ENCODE measurements at regions of chr11 and their contacts with region 1.

Region 1: GRCh38 chr11:44658506-44658850 is 68.3 kb upstream of the TSPAN18 start:
- DNase-seq: peak in 4 of 5 donors; percentile 30 to 44 (median 32)
- H3K4me3 ChIP-seq: no peak overlapping the region
- H3K4me3 Mint-ChIP-seq: peak overlapping the region in 2 of 8 donors; percentile 27 to 66
- H3K27ac ChIP-seq: no peak overlapping the region
- H3K27ac Mint-ChIP-seq: peak overlapping the region in 2 of 7 donors; percentile 11 to 81
- H3K4me1 ChIP-seq: peaks cover 18% of the 10 kb centered on the region
- H3K4me1 Mint-ChIP-seq: peaks cover 19 to 38% (median 25%) of the 10 kb centered on the region in 4 donors
- H3K27me3 ChIP-seq: no peaks in the 10 kb centered on the region
- H3K27me3 Mint-ChIP-seq: no peaks in the 10 kb centered on the region

Region 2: DNA sequence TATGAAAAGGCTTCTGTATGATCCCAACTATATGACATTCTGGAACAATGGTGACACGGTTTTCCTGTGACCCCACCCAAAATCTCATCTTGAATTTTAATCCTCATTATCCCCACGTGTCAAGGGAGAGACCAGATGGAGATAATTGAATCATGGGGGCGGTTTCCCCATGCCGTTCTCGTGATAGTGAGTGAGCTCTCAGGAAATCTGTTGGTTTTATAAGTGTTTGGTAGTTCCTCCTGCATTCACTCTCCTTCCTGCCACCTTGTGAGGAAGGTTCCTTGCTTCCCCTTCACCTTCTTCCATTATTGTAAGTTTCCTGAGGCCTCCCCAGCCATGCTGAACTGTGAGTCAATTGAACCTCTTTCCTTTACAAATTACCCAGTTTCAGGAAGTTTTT is 15.2 kb after region 1 on chr11:
- CTCF ChIA-PET with region 1: no interaction called
- POLR2A ChIA-PET with region 1: interaction called, 3 read pairs
- intact Hi-C with region 1: loop called (anchors 2 kb)
- DNase-seq: no peak
- H3K4me3 ChIP-seq: no peak overlapping the region
- H3K4me3 Mint-ChIP-seq: peak overlapping the region in 3 of 8 donors; percentile 35 to 80 (median 67)
- H3K27ac ChIP-seq: no peak overlapping the region
- H3K27ac Mint-ChIP-seq: peak overlapping the region in 6 of 7 donors; percentile 18 to 68 (median 48)
- H3K4me1 ChIP-seq: peaks cover under 1% of the 10 kb centered on the region
- H3K4me1 Mint-ChIP-seq: peaks cover 15 to 51% (median 25%) of the 10 kb centered on the region in 4 donors
- H3K27me3 ChIP-seq: no peaks in the 10 kb centered on the region
- H3K27me3 Mint-ChIP-seq: no peaks in the 10 kb centered on the region